GM12878 (cell line): ENCODE measurements at regions of chr10 and their contacts with region 1.

Region 1: GRCh38 chr10:34677591-34677990 is 137.5 kb downstream of the PARD3 start:
- DNase-seq: no peak
- ATAC-seq: no peak
- H3K4me3 ChIP-seq: no peak overlapping the region
- H3K27ac ChIP-seq: no peak overlapping the region
- H3K4me1 ChIP-seq: no peaks in the 10 kb centered on the region
- H3K27me3 ChIP-seq: no peaks in the 10 kb centered on the region
- CTCF ChIP-seq: 0 out of 6 replicates have a peak, but pooled peaks of 1 of the 3 experiments have one; percentile 4
- EP300 ChIP-seq: no peak
- POLR2A ChIP-seq: no peak
- RAD21 ChIP-seq: no peak

Region 2: DNA sequence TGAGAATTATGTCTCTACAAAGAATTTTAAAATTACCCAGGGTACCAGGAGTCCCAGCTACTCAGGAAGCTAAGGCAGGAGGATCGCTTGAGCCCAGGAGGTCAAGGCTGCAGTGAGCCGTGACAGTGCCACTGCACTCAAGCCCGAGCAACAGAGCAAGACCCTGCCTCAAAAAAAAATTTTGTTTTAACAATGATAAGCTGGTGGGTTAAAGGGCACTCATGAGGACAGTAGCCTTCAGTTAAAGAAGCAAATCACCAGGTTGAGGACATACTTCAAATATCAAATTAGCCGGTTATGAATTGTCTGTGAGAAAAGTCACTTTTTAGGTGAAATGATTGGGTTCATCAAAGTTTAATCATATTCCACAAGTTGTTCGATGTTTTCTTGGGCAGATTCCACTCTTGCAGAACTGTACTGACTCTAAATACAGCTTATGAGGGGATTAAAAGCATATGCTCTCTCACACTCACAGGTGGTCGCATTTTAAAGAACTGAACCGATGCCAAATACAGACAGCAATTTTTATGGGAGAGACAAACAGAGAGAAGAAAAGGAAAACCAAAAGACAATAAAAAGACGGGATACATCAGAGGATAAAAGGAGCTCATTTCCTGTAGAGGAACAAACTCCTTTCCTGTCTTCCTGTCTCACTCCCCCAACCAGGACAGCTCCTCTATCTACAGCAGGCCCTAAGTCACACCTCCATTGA is 760.4 kb before region 1 on chr10:
- CTCF ChIA-PET with region 1: no interaction called
- POLR2A ChIA-PET with region 1: no interaction called
- RAD21 ChIA-PET with region 1: no interaction called
- SMC1A ChIA-PET with region 1: no interaction called
- in situ Hi-C with region 1: no loop called
- intact Hi-C with region 1: no loop called
- DNase-seq: no peak
- ATAC-seq: no peak
- H3K4me3 ChIP-seq: no peak overlapping the region
- H3K27ac ChIP-seq: no peak overlapping the region
- H3K4me1 ChIP-seq: no peaks in the 10 kb centered on the region
- H3K27me3 ChIP-seq: no peaks in the 10 kb centered on the region
- CTCF ChIP-seq: no peak
- EP300 ChIP-seq: no peak
- POLR2A ChIP-seq: no peak
- RAD21 ChIP-seq: no peak

Region 3: DNA sequence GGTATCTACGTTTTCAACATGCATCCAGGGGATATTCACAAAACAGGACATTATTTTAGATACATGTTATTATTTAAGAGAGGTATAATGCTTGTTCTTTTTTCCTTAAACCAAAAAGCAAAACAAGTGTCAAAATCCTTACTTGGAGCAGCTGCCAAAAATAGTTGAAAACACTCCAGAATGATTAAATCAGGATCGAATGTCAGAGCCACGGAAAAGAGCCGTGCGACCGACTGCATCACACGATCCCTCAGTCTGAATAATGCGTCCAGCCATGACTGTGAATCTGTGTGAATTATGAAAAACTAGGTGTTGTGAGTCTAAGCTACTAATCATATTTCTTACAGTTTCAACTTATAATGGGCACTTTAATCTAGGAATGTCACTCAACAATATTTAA is 11.5 kb after region 1 on chr10:
- CTCF ChIA-PET with region 1: no interaction called
- POLR2A ChIA-PET with region 1: interaction called, 5 read pairs
- RAD21 ChIA-PET with region 1: interaction called, 7 read pairs
- SMC1A ChIA-PET with region 1: interaction called, 16 read pairs
- in situ Hi-C with region 1: no loop called
- intact Hi-C with region 1: no loop called
- DNase-seq: no peak
- ATAC-seq: no peak
- H3K4me3 ChIP-seq: no peak overlapping the region
- H3K27ac ChIP-seq: no peak overlapping the region
- H3K4me1 ChIP-seq: no peaks in the 10 kb centered on the region
- H3K27me3 ChIP-seq: no peaks in the 10 kb centered on the region
- CTCF ChIP-seq: no peak
- EP300 ChIP-seq: no peak
- POLR2A ChIP-seq: no peak
- RAD21 ChIP-seq: no peak

Region 4: GRCh38 chr10:34768261-34768971 is 90.8 kb after region 1 on chr10:
- CTCF ChIA-PET with region 1: no interaction called
- POLR2A ChIA-PET with region 1: no interaction called
- RAD21 ChIA-PET with region 1: no interaction called
- SMC1A ChIA-PET with region 1: no interaction called
- in situ Hi-C with region 1: no loop called
- intact Hi-C with region 1: no loop called
- DNase-seq: no peak
- ATAC-seq: peak; percentile 11; the same call in 1 of the 3 replicates
- H3K4me3 ChIP-seq: no peak overlapping the region
- H3K27ac ChIP-seq: no peak overlapping the region
- H3K4me1 ChIP-seq: no peaks in the 10 kb centered on the region
- H3K27me3 ChIP-seq: no peaks in the 10 kb centered on the region
- CTCF ChIP-seq: no peak
- EP300 ChIP-seq: no peak
- POLR2A ChIP-seq: no peak
- RAD21 ChIP-seq: no peak